GM10248 (cell line): ENCODE measurements at regions of chr7 and their contacts with region 1.

Region 1: GRCh38 chr7:36986429-36987362 is 262.4 kb upstream of the AOAH start:
- DNase-seq: peak; percentile 75
- CTCF ChIP-seq: peak; percentile 67

Region 2: GRCh38 chr7:36929791-36930190 is 56.9 kb before region 1 on chr7:
- CTCF ChIA-PET with region 1: interaction called, 13 read pairs
- POLR2A ChIA-PET with region 1: no interaction called
- DNase-seq: no peak
- CTCF ChIP-seq: no peak

Region 3: DNA sequence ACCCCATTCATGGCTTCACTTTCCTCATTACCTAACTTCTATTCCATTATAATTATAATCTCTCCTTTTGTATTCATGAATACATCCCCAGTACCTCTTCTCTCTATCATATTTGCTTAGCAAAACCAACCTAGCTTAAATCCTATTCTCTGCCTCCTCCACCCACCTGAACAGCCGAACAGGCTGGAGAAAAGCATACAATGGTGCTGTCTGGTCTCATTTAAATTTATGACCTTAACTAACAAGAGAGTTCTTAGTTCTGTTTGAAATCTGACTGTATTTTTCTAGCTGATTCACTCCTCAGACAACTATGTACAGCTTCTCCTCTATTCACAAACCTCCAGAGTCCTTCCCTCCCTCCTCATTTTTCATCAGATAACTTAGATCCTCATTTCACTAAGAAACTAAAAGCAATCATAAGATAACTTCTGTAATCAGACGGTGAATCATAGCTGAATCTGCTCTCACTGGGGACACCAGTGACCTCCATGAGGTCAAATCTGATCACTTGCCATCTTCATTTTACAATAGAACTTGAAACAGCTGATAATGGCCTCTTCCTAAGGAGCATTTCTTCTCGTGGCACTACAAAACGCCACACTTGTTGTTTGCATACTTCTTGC is 28.5 kb before region 1 on chr7:
- CTCF ChIA-PET with region 1: interaction called, 14 read pairs
- POLR2A ChIA-PET with region 1: no interaction called
- DNase-seq: no peak
- CTCF ChIP-seq: no peak

Region 4: GRCh38 chr7:36967387-36967786 is 19.3 kb before region 1 on chr7:
- CTCF ChIA-PET with region 1: interaction called, 17 read pairs
- POLR2A ChIA-PET with region 1: no interaction called
- DNase-seq: peak; percentile 34
- CTCF ChIP-seq: peak; percentile 33